Heart left ventricle (tissue), 16 donors: ENCODE measurements at regions of chr11 and their contacts with region 1.

Region 1: DNA sequence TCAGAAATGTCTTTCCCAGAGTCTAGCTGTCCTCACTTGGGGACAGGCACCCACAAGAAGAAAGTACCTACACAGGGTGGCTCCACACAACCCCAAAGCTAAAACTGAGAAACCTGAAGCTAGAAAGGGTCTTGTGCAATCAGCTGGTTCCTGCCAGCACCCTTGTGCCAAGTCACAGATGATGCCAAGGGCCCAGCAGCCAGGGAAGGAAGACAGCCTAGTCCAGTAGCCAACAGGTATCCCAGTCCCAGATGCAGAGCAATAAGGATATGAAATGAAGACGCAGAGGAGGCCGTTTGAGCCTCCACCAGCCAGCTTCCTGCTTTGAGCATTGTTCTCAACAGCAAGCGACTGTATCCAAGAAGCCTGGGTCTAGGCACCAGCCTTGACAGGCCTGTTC is 6.1 kb downstream of the PLEKHA7 start:
- DNase-seq: no peak
- ATAC-seq: peak in 1 of 4 donors; percentile 36
- H3K4me3 ChIP-seq: no peak overlapping the region
- H3K27ac ChIP-seq: no peak overlapping the region
- H3K4me1 ChIP-seq: peaks cover 0 to 5% (median 0%) of the 10 kb centered on the region in 12 donors
- H3K27me3 ChIP-seq: peaks cover 0 to 15% (median 0%) of the 10 kb centered on the region in 9 donors
- CTCF ChIP-seq: no peak
- POLR2A ChIP-seq: no peak

Region 2: DNA sequence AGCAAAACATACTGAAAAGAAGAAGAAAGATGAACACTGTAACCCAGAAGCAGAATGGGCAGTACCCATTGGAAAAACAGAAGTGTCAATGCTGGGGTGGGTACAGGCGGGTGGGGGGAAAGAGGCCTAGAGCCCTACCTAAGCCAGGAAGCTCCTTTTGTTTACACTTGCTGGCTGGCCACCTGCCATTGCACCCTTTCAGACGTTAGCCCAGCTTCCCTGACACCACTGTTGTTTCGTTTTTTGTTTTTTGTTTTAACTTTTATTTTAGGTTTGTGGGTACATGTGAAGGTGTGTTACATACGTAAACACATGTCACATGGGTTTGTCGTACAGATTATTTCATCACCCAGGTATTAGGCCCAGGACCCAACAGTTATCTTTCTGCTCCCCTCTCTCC is 49.3 kb before region 1 on chr11:
- intact Hi-C with region 1: loop called in 1 of 10 experiments (anchors 10 kb)
- DNase-seq: no peak
- ATAC-seq: no peak
- H3K4me3 ChIP-seq: no peak overlapping the region
- H3K27ac ChIP-seq: no peak overlapping the region
- H3K4me1 ChIP-seq: no peaks in the 10 kb centered on the region
- H3K27me3 ChIP-seq: no peaks in the 10 kb centered on the region
- CTCF ChIP-seq: no peak
- POLR2A ChIP-seq: no peak